Gastrocnemius medialis (tissue), 4 donors: ENCODE measurements at regions of chr2 and their contacts with region 1.

Region 1: GRCh38 chr2:6773007-6773693 is 92.6 kb downstream of the CMPK2 start:
- DNase-seq: peak in 1 of 2 donors; percentile 7
- ATAC-seq: peak; percentile 55 to 75
- H3K4me3 ChIP-seq: peak overlapping the region in 1 of 4 donors; percentile 10
- H3K27ac ChIP-seq: no peak overlapping the region
- H3K4me1 ChIP-seq: peaks cover 0 to 6% of the 10 kb centered on the region in 2 donors
- H3K27me3 ChIP-seq: no peaks in the 10 kb centered on the region
- CTCF ChIP-seq: peak; percentile 81 to 96 (median 88)
- POLR2A ChIP-seq: no peak

Region 2: DNA sequence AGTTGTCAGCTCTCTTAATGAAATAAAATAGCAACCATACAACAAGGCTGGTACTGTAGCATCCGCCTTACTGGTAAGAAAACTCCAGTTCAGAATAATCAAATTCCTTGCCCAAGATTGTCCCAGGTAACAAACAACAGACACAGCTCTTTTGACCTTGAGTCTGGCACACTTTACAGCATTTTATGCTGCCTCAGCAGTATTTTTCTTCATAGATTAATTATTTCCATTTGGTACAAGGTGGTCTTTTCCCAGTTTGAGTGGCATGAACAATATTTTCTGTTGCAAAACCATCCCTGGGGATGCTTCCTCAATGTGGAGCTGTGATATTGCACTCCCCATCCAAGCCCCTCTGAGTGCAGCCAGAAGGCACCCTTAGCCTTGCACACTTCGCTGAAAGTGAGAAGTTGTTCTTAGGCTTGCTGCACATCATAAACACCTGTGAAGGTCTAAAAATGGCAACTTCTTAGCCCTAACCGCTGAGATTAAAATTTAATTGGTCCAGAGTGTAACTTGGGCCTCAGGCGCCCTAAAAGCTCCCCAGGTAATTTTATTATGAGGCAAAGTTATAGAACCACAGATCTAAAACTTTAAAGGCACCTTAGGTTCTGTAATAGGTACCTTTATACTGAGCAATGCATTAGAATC is 430.8 kb before region 1 on chr2:
- in situ Hi-C with region 1: loop called in 1 of 4 experiments (anchors 10 kb)
- intact Hi-C with region 1: no loop called
- DNase-seq: no peak
- ATAC-seq: no peak
- H3K4me3 ChIP-seq: no peak overlapping the region
- H3K27ac ChIP-seq: no peak overlapping the region
- H3K4me1 ChIP-seq: no peaks in the 10 kb centered on the region
- H3K27me3 ChIP-seq: peaks cover 0 to 5% (median 0%) of the 10 kb centered on the region in 3 donors
- CTCF ChIP-seq: no peak
- POLR2A ChIP-seq: no peak

Region 3: GRCh38 chr2:6352906-6353515 is 420.1 kb before region 1 on chr2:
- in situ Hi-C with region 1: loop called (anchors 5 to 10 kb)
- intact Hi-C with region 1: loop called (anchors 1 kb)
- DNase-seq: peak in 1 of 2 donors; percentile 17
- ATAC-seq: peak in 1 of 2 donors; percentile 39
- H3K4me3 ChIP-seq: no peak overlapping the region
- H3K27ac ChIP-seq: no peak overlapping the region
- H3K4me1 ChIP-seq: peaks cover 0 to 8% of the 10 kb centered on the region in 2 donors
- H3K27me3 ChIP-seq: no peaks in the 10 kb centered on the region
- CTCF ChIP-seq: peak; percentile 28 to 65 (median 51)
- POLR2A ChIP-seq: no peak